Dorsolateral prefrontal cortex (tissue), 120 donors: ENCODE measurements at regions of chr7 and their contacts with region 1.

Region 1: DNA sequence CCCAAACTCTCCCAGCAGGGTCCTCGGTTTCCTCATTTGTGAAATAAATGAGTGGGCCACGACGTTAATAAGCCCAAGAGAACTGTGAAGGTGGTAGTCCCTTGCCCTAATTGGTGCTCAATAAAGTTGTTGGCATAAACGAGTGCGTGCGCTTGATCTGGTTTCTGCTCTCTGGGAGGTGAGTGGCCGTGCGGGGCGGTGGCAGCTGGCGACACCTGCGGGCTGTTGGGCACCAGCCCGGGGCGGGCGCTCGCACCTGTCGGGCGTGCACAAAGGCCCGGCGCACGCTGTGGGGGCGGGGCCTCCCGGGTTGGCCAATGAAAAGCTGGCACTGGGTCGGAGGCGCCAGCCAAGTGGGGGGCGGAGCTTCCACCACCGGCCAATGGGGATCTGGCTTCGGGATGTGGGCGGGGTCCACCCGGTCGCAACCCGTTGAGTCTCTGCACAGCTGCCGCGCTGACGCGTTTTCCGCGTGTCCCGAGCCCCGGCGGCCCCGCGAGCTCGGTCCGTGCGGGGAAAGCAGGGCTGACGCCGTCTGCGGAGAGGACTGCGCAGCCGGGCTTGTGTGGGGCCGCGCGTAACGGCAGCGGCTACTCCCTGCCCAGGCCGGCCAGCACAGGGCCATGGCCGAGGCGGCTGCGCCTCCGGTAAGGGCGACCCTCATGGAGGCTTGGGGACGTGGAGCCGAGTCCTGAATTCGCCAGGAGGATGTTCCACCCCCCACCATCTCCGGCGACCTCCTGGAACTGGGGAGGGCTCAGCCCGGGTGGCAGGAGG is 23.0 kb downstream of the ZNF783 start:
- DNase-seq: peak; percentile 93 to 97 (median 96)
- H3K4me3 ChIP-seq: peak overlapping the region; percentile 54 to 98 (median 79)
- H3K27ac ChIP-seq: peak overlapping the region in 24 of 59 donors; percentile 0 to 67 (median 36)
- H3K27me3 ChIP-seq: no peaks in the 10 kb centered on the region
- CTCF ChIP-seq: peak in 24 of 56 donors; percentile 8 to 45 (median 23)

Region 2: GRCh38 chr7:148962823-148963582 is 322.0 kb before region 1 on chr7:
- intact Hi-C with region 1: no loop called
- DNase-seq: peak; percentile 58 to 87 (median 78)
- H3K4me3 ChIP-seq: peak overlapping the region; percentile 48 to 83 (median 66)
- H3K27ac ChIP-seq: peak overlapping the region; percentile 26 to 97 (median 89)
- H3K27me3 ChIP-seq: no peaks in the 10 kb centered on the region
- CTCF ChIP-seq: peak; percentile 39 to 97 (median 85)

Region 3: GRCh38 chr7:149171892-149172533 is 113.0 kb before region 1 on chr7:
- intact Hi-C with region 1: no loop called
- DNase-seq: no peak
- H3K4me3 ChIP-seq: no peak overlapping the region
- H3K27ac ChIP-seq: no peak overlapping the region
- H3K27me3 ChIP-seq: no peaks in the 10 kb centered on the region
- CTCF ChIP-seq: no peak

Region 4: GRCh38 chr7:149414745-149415390 is 129.8 kb after region 1 on chr7:
- intact Hi-C with region 1: loop called in 1 of 2 experiments (anchors 10 kb)
- DNase-seq: peak in 9 of 10 donors; percentile 61 to 86 (median 72)
- H3K4me3 ChIP-seq: peak overlapping the region; percentile 2 to 67 (median 42)
- H3K27ac ChIP-seq: peak overlapping the region in 44 of 59 donors; percentile 0 to 85 (median 55)
- H3K27me3 ChIP-seq: no peaks in the 10 kb centered on the region
- CTCF ChIP-seq: peak in 4 of 56 donors; percentile 14 to 20 (median 15)